ENCODE measurements at regions of chr20 and their contacts with region 1.

Region 1: GRCh38 chr20:62704301-62704948 is 4.2 kb upstream of the NTSR1 start:
- DNase-seq: peak; percentile 65 to 66
- ATAC-seq: peak; percentile 45 to 61; a peak in 4 of 6 replicates
- H3K4me3 ChIP-seq: no peak overlapping the region
- H3K27ac ChIP-seq: peak overlapping the region; percentile 56 to 84; a peak in 4 of 6 replicates
- H3K4me1 ChIP-seq: peaks cover 42% of the 10 kb centered on the region
- CTCF ChIP-seq: no peak
- EP300 ChIP-seq: no peak
- POLR2A ChIP-seq: no peak
- RAD21 ChIP-seq: no peak

Region 2: GRCh38 chr20:62536871-62537401 is 167.5 kb before region 1 on chr20:
- CTCF ChIA-PET with region 1: no interaction called
- POLR2A ChIA-PET with region 1: no interaction called
- DNase-seq: no peak
- ATAC-seq: no peak
- H3K4me3 ChIP-seq: no peak overlapping the region
- H3K27ac ChIP-seq: no peak overlapping the region
- H3K4me1 ChIP-seq: no peaks in the 10 kb centered on the region
- CTCF ChIP-seq: no peak
- EP300 ChIP-seq: no peak
- POLR2A ChIP-seq: no peak
- RAD21 ChIP-seq: no peak

Region 3: DNA sequence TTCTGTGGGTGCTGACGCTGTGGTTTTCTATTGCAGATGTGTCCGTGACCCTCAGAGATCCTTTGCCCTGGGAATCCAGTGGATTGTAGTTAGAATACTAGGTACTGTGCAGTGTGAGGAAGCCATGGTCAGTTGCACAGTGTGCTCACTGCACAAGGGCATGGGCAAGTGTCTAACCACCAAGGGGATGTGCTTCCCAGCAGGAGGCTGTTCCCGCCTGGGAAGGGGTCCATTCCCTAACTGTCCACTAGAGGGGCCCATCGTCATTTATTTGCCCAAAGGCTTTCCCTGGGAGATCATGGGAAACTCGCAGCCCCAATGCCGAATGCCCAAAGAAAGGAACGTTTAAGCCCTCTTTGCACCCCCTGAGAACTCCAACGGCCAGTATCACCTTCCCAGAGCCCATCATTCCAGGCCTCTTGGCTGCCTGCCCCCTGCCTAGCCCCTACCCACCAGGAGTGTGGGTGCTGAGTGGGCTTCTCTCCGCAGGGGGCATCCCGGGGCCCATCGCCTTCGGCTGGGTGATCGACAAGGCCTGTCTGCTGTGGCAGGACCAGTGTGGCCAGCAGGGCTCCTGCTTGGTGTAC is 35.9 kb before region 1 on chr20:
- CTCF ChIA-PET with region 1: interaction called, 12 read pairs
- POLR2A ChIA-PET with region 1: no interaction called
- DNase-seq: peak; percentile 72 to 91
- ATAC-seq: peak; percentile 79 to 91
- H3K4me3 ChIP-seq: no peak overlapping the region
- H3K27ac ChIP-seq: no peak overlapping the region
- H3K4me1 ChIP-seq: no peaks in the 10 kb centered on the region
- CTCF ChIP-seq: peak; percentile 88
- EP300 ChIP-seq: no peak
- POLR2A ChIP-seq: no peak
- RAD21 ChIP-seq: peak; percentile 93 to 97

Region 4: GRCh38 chr20:62685781-62686555 is 18.5 kb before region 1 on chr20:
- CTCF ChIA-PET with region 1: interaction called, 14 read pairs
- POLR2A ChIA-PET with region 1: no interaction called
- DNase-seq: no peak
- ATAC-seq: no peak
- H3K4me3 ChIP-seq: no peak overlapping the region
- H3K27ac ChIP-seq: no peak overlapping the region
- H3K4me1 ChIP-seq: no peaks in the 10 kb centered on the region
- CTCF ChIP-seq: no peak
- EP300 ChIP-seq: no peak
- POLR2A ChIP-seq: no peak
- RAD21 ChIP-seq: no peak

Region 5: DNA sequence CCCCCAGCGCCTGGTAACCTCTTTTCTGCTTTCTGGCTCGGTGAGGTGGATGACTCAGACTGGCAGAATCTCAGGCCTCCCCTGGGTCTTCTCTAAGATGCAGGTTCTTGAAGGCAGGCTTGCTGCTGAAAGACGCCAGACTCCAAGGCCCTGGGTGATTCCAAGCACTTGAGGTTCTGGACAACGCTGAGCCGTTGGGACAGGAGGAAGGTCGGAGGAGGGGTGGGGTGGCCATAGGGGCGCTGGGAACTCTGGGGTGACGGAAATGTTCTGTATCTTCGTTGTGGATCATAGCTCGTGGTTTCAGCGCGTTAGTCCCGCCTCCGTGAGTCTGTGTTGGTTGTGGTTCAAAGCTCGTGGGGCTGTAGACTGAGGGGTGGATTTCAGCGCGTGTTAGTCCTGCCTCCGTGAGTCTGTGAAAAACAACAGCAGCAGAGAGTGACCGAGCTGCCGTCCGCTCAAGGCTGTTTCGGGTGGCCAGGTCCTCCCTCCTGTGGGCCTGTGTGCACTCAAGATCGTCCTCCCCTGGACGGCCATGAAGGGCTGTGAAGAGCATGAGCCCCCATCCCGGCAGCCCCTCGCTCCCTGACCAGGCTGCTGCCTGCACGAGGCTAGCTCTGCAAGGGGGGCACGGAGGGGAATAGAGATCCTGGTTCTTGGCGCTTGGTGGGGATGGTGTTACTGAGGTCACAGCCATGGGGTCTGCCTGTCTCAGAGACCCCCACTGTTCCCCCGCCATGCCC is 11.9 kb after region 1 on chr20:
- CTCF ChIA-PET with region 1: interaction called, 22 read pairs
- POLR2A ChIA-PET with region 1: no interaction called
- DNase-seq: no peak
- ATAC-seq: no peak; a peak in 1 of 6 replicates
- H3K4me3 ChIP-seq: no peak overlapping the region
- H3K27ac ChIP-seq: no peak overlapping the region
- H3K4me1 ChIP-seq: no peaks in the 10 kb centered on the region; the same call in 2 of the 3 replicates
- CTCF ChIP-seq: no peak
- EP300 ChIP-seq: no peak
- POLR2A ChIP-seq: no peak
- RAD21 ChIP-seq: no peak

Region 6: GRCh38 chr20:62723351-62723750 is 18.9 kb after region 1 on chr20:
- CTCF ChIA-PET with region 1: interaction called, 22 read pairs
- POLR2A ChIA-PET with region 1: no interaction called
- DNase-seq: no peak
- ATAC-seq: no peak
- H3K4me3 ChIP-seq: no peak overlapping the region
- H3K27ac ChIP-seq: no peak overlapping the region
- H3K4me1 ChIP-seq: no peaks in the 10 kb centered on the region
- CTCF ChIP-seq: no peak
- EP300 ChIP-seq: no peak
- POLR2A ChIP-seq: no peak
- RAD21 ChIP-seq: no peak

Region 7: GRCh38 chr20:62740286-62741141 is 36.1 kb after region 1 on chr20:
- CTCF ChIA-PET with region 1: interaction called, 10 read pairs
- POLR2A ChIA-PET with region 1: no interaction called
- DNase-seq: peak; percentile 70 to 83
- ATAC-seq: peak; percentile 80 to 90
- H3K4me3 ChIP-seq: no peak overlapping the region; the same call in 2 of the 3 replicates
- H3K27ac ChIP-seq: peak overlapping the region; percentile 78 to 86
- H3K4me1 ChIP-seq: peaks cover 21% of the 10 kb centered on the region
- CTCF ChIP-seq: no peak
- EP300 ChIP-seq: peak in 1 of 2 experiments; percentile 31; a peak in 1 of 5 replicates
- POLR2A ChIP-seq: no peak
- RAD21 ChIP-seq: no peak; a peak in 1 of 5 replicates

Region 8: GRCh38 chr20:62808211-62808865 is 103.9 kb after region 1 on chr20:
- CTCF ChIA-PET with region 1: interaction called, 10 read pairs
- POLR2A ChIA-PET with region 1: no interaction called
- DNase-seq: peak; percentile 65 to 83
- ATAC-seq: peak; percentile 58 to 82; a peak in 4 of 6 replicates
- H3K4me3 ChIP-seq: no peak overlapping the region
- H3K27ac ChIP-seq: no peak overlapping the region
- H3K4me1 ChIP-seq: peaks cover 17% of the 10 kb centered on the region
- CTCF ChIP-seq: peak; percentile 85
- EP300 ChIP-seq: no peak
- POLR2A ChIP-seq: no peak
- RAD21 ChIP-seq: peak; percentile 69 to 73

Region 9: GRCh38 chr20:62829231-62830230 is 125.1 kb after region 1 on chr20:
- CTCF ChIA-PET with region 1: no interaction called
- POLR2A ChIA-PET with region 1: no interaction called
- DNase-seq: no peak
- ATAC-seq: no peak
- H3K4me3 ChIP-seq: no peak overlapping the region
- H3K27ac ChIP-seq: peak overlapping the region in 1 of 2 experiments; percentile 61; a peak in 2 of 6 replicates
- H3K4me1 ChIP-seq: peaks cover 19% of the 10 kb centered on the region
- CTCF ChIP-seq: no peak
- EP300 ChIP-seq: no peak
- POLR2A ChIP-seq: no peak
- RAD21 ChIP-seq: no peak

Measured in A549 (cell line).